ENCODE measurements at regions of chr9 and their contacts with region 1.

Region 1: DNA sequence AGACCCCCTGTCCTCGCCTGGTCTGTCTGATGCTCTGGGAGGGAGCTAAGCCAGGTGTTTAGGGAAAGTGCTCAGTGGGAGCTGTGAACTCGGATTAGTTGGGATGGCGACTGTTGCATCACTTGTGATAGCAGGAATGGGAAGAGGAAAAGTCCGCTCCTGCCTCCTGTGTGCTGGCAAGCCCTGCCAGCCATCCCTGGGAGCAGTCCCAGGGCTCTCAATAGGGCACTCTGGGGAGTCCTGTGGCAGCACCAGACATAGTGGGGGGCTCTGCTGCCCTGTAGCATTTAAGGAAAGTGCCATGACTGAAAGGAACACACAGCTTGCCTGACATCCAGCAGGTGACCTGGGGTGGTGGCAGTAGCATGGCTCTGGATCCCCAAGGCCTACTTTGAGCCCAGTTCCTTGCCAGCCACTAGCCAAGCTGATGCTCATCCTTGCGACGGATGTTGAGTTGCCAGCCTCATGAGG is 81.5 kb downstream of the AMBP start:
- DNase-seq: no peak
- H3K4me3 ChIP-seq: no peak overlapping the region
- H3K27me3 ChIP-seq: no peaks in the 10 kb centered on the region
- CTCF ChIP-seq: no peak

Region 2: DNA sequence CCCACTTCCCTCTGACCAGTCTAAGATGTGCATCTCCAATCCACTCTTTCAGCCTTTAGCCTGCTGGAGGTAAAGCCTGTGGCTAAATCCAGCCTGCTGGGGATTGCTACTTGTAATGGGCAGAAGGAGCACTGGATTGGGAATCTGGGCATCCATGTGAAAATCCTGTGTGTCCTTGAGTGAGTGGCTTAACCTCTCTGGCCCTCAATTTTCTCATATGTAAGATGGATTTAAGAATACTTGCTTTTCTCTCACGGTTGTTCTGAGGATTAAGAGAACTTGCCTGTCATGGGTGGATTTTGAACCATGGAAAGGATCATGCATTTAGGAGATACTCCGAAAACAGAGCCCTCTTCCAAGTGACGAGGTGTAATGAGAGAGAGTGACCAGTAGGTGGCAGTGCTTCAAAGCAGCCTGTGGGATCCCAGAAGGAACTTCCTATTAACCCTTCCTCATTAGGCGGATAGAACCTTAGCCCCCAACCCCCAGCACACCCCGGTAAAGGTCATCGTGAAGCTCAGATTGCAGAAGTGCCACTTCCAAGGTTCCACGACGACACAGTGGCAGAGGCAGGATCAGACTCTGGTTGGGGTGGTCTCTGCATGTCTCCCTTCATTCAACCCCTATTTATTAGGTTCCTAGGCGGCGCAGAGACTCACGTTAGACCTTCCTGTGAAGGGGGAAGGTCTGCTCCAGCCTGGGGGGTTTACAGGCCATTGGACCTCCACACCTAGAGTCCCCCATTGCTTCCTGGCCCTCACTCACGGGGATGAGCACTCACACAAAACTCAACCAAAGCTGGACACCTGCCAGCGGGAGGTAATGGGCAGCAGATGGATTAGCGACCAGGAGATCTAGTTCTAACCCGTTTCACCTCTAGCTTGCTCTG is 189.1 kb before region 1 on chr9:
- CTCF ChIA-PET with region 1: interaction called, 11 read pairs
- POLR2A ChIA-PET with region 1: no interaction called
- DNase-seq: no peak
- H3K4me3 ChIP-seq: 0 out of 2 replicates have a peak overlapping the region, but pooled peaks have one; percentile 2
- H3K27me3 ChIP-seq: peaks cover 3% of the 10 kb centered on the region
- CTCF ChIP-seq: peak; percentile 89

Measured in BJ (cell line).